Activated T-helper 2 cell treated with anti-CD3 and anti-CD28 coated beads, Interferon-gamma antibody, Interleukin-2, Interleukin-4, amounts not matched to agents 10 μg/mL and 5 μg/mL and 100 μg/mL, durations not matched to agents 14 hours and 24 hours and 36 hours (primary cell): ENCODE measurements at regions of chr1 and their contacts with region 1.

Region 1: GRCh38 chr1:171583581-171584201 is 38.4 kb upstream of the MYOCOS start:
- DNase-seq: no peak
- H3K4me3 Mint-ChIP-seq: no peak overlapping the region
- H3K27ac Mint-ChIP-seq: no peak overlapping the region
- H3K4me1 Mint-ChIP-seq: peaks cover 21% of the 10 kb centered on the region
- H3K27me3 Mint-ChIP-seq: no peaks in the 10 kb centered on the region

Region 2: DNA sequence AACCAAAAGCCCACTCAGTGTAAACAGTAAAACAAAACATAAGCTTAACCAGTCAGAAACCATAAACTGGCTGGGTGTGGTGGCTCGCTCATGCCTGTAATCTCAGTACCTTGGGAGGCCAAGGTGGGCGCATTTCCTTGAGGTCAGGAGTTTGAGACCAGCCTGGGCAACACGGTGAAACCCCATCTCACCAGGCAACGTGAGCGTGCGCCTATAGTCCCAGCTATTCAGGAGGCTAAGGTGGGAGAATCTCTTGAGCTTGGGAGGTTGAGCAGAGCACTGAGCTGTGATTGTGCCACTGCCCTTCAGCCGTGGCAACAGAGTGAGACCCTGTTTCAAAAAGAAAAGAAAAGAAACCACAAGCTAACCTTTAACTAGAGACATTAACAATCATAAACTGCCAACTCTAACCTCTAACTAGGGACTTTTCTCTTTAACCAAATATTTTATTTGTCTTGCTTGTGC is 111.5 kb before region 1 on chr1:
- intact Hi-C with region 1: no loop called
- DNase-seq: no peak
- H3K4me3 Mint-ChIP-seq: no peak overlapping the region
- H3K27ac Mint-ChIP-seq: no peak overlapping the region
- H3K4me1 Mint-ChIP-seq: no peaks in the 10 kb centered on the region
- H3K27me3 Mint-ChIP-seq: peaks cover 17% of the 10 kb centered on the region

Region 3: DNA sequence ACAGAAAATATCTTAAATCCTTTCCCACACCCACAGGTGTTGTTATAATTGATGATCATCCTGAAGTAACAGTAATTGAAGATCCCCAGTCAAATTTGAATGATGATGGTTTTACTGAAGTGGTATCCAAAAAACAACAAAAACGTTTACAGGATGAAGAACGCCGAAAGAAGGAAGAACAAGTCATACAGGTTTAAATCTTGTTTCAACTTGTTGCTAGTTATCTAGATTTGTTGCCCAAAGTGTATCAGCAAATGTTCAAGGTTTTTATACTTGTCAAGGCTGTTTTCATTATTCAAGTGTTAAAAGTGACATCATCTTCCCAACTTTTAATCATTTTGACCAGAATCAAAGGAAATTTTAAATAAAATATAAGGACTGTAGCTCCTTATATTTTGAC is 33.6 kb before region 1 on chr1:
- intact Hi-C with region 1: loop called (anchors 5 kb)
- DNase-seq: no peak
- H3K4me3 Mint-ChIP-seq: no peak overlapping the region
- H3K27ac Mint-ChIP-seq: no peak overlapping the region
- H3K4me1 Mint-ChIP-seq: peaks cover 15% of the 10 kb centered on the region
- H3K27me3 Mint-ChIP-seq: no peaks in the 10 kb centered on the region